Thyroid gland (tissue), 4 donors: ENCODE measurements at regions of chrX and their contacts with region 1.

Region 1: GRCh38 chrX:130079824-130080406 is 30.4 kb downstream of the ELF4 start:
- DNase-seq: peak; percentile 48 to 54
- H3K4me3 ChIP-seq: no peak overlapping the region
- H3K27ac ChIP-seq: no peak overlapping the region
- H3K4me1 ChIP-seq: peaks cover 0 to 11% of the 10 kb centered on the region in 2 donors
- H3K27me3 ChIP-seq: no peaks in the 10 kb centered on the region
- CTCF ChIP-seq: peak in 5 of 6 experiments; percentile 30 to 61 (median 59)
- POLR2A ChIP-seq: no peak

Region 2: DNA sequence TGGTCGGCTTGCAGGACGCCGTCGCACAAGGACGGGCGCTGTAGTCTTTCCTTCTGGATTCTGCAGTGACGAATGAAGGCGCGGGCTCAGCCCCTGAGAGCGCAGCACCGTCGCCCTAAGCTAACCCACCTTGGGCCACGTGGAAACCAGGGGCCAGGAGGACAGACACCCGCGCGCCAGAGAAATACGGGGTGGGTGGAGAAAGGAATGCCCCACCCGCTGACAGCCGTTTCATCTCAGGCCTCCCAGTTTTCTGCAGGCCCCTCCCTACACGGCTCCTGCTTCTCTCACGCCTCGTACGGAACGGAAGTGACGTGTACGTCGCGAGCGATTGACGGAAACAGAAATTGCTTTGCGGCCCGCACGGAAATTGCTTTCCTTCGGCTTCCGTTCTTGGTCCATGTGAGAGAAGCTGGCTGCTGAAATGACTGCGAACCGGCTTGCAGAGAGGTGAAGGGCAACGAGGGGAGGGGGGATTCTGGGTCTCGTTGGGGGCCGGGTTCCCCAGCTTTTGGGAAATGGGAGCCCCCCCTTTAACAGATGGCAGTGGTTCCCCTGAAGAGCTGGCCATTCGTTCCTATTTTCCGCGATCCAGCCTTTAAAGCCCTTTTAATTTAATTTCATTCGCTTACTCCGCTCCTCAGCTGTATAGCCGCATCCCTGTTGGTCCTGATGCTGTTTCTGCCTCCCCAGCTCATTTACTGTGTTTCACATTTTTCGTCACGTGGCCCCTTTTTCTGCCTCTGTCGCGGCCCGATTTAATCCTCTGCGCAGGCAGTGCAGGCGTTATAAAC is 173.9 kb before region 1 on chrX and contains the start of gene UTP14A:
- intact Hi-C with region 1: no loop called
- DNase-seq: peak; percentile 87 to 90
- H3K4me3 ChIP-seq: peak within 1 kb of the TSS in 2 of 3 donors; percentile 38 to 58
- H3K27ac ChIP-seq: peak within 1 kb of the TSS; percentile 6 to 42 (median 36)
- H3K4me1 ChIP-seq: no peaks in the 10 kb centered on the region
- H3K27me3 ChIP-seq: no peaks in the 10 kb centered on the region
- CTCF ChIP-seq: no peak
- POLR2A ChIP-seq: peak in 1 of 2 donors; percentile 51
- total RNA-seq, gene UTP14A: 12.2 to 14.7 (median 13.4) TPM

Region 3: DNA sequence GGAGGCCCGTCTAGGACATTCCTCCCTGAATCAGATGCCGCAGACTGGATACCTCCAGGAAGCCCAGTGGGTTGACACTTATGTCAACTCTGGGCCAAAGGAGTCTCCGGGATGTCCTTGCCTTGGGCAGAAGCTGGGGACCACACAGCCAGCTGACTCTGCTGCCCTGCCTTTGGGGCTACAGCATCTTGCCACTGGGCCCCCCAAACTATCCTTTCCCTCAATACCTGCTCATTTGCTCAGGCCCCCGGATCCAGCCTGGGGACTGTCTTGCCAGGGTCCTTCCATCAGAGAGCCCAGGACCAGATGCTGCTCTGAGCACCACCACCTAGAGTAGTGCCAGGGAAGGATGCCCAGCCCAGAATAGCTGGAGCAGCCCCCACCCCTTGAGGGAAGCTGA is 110.9 kb after region 1 on chrX:
- intact Hi-C with region 1: loop called (anchors 5 kb)
- DNase-seq: no peak
- H3K4me3 ChIP-seq: no peak overlapping the region
- H3K27ac ChIP-seq: no peak overlapping the region
- H3K4me1 ChIP-seq: no peaks in the 10 kb centered on the region
- H3K27me3 ChIP-seq: no peaks in the 10 kb centered on the region
- CTCF ChIP-seq: no peak
- POLR2A ChIP-seq: no peak